Mammary epithelial cell (primary cell): ENCODE measurements at regions of chr3 and their contacts with region 1.

Region 1: DNA sequence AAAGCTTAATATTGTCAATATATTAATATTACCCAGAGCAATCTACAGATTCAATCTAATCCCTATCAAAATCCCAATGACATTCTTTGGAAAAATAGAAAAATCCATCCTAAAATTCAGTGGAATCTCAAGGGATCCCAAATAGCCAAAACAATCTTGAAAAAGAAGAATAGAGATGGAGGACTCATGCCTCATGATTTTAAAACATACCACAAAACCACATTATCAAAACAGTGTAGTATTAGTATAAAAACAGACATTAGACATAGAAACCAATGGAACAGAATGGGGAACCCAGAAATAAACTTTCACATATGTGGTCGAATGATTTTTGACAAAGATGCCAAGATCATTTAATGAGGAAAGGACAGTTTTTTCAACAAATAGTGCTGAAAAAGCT is 14.6 kb downstream of the NEK4 start:
- DNase-seq: no peak
- H3K4me3 ChIP-seq: no peak overlapping the region
- H3K27ac ChIP-seq: no peak overlapping the region
- H3K4me1 ChIP-seq: no peaks in the 10 kb centered on the region
- H3K27me3 ChIP-seq: no peaks in the 10 kb centered on the region
- CTCF ChIP-seq: no peak

Region 2: GRCh38 chr3:52714335-52715302 is 41.5 kb before region 1 on chr3:
- CTCF ChIA-PET with region 1: no interaction called
- dilution Hi-C with region 1: loop called (anchors 5 kb)
- in situ Hi-C with region 1: no loop called
- intact Hi-C with region 1: no loop called
- DNase-seq: no peak
- H3K4me3 ChIP-seq: no peak overlapping the region
- H3K27ac ChIP-seq: no peak overlapping the region
- H3K4me1 ChIP-seq: no peaks in the 10 kb centered on the region
- H3K27me3 ChIP-seq: no peaks in the 10 kb centered on the region
- CTCF ChIP-seq: no peak

Region 3: GRCh38 chr3:52834871-52835501 is 78.8 kb after region 1 on chr3 and contains the start of gene MUSTN1:
- CTCF ChIA-PET with region 1: no interaction called
- dilution Hi-C with region 1: loop called (anchors 5 kb)
- in situ Hi-C with region 1: no loop called
- intact Hi-C with region 1: no loop called
- DNase-seq: no peak
- H3K4me3 ChIP-seq: no peak within 1 kb of the TSS
- H3K27ac ChIP-seq: no peak within 1 kb of the TSS
- H3K4me1 ChIP-seq: peaks cover 20% of the 10 kb centered on the region
- H3K27me3 ChIP-seq: no peaks in the 10 kb centered on the region
- CTCF ChIP-seq: no peak
- total RNA-seq, gene MUSTN1: not detected